PC-3 (cell line): ENCODE measurements at regions of chr18 and their contacts with region 1.

Region 1: DNA sequence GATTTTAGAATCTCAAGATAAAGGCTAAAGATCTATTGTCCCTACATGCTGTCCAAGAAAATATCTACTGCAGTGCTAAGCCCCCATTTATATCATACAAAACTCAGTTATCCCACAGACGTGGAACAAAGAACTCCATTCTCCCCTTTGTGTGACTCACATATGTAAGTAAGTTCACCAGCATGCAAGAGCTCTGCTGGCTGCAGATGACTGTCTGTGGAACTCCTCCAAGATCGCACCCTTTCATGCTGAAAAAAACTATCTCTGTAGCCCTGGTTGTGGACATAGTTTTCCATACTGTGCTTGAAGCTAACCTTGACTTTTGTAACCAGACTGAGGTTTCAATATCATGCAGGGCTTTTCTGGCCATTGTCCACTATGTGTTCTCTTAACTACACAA is 207.1 kb downstream of the ZNF521 start:
- DNase-seq: peak; percentile 17
- ATAC-seq: peak; percentile 67
- H3K4me3 ChIP-seq: no peak overlapping the region
- H3K27ac ChIP-seq: no peak overlapping the region
- H3K4me1 ChIP-seq: no peaks in the 10 kb centered on the region
- H3K27me3 ChIP-seq: peaks cover 46% of the 10 kb centered on the region
- CTCF ChIP-seq: no peak

Region 2: DNA sequence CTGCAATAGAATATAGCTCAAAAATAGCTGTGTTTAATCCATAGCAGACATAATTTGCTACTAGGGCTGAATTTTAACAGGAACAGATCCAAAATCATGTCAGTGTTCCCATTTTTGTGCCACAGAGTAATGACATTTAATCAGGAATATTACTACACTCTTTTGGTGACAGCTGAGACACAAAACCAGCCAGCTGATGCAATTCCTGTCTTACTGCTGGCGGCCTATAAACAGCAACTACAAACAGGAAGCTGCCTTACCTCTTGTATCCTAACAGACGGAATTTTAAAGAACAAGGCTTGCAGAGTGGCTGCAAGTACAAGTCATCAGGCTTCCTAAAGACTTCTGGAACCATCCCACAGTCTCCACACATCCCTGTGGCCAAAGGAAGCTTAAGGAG is 10.9 kb before region 1 on chr18:
- CTCF ChIA-PET with region 1: interaction called, 12 read pairs
- POLR2A ChIA-PET with region 1: no interaction called
- intact Hi-C with region 1: no loop called
- DNase-seq: no peak
- ATAC-seq: no peak
- H3K4me3 ChIP-seq: no peak overlapping the region
- H3K27ac ChIP-seq: no peak overlapping the region
- H3K4me1 ChIP-seq: no peaks in the 10 kb centered on the region
- H3K27me3 ChIP-seq: peaks cover 59% of the 10 kb centered on the region
- CTCF ChIP-seq: no peak

Region 3: GRCh38 chr18:25289001-25289631 is 144.3 kb after region 1 on chr18:
- CTCF ChIA-PET with region 1: interaction called, 15 read pairs
- POLR2A ChIA-PET with region 1: no interaction called
- intact Hi-C with region 1: no loop called
- DNase-seq: peak; percentile 84
- ATAC-seq: peak; percentile 88
- H3K4me3 ChIP-seq: peak overlapping the region; percentile 49
- H3K27ac ChIP-seq: peak overlapping the region; percentile 95
- H3K4me1 ChIP-seq: peaks cover 18% of the 10 kb centered on the region
- H3K27me3 ChIP-seq: no peaks in the 10 kb centered on the region
- CTCF ChIP-seq: no peak

Region 4: DNA sequence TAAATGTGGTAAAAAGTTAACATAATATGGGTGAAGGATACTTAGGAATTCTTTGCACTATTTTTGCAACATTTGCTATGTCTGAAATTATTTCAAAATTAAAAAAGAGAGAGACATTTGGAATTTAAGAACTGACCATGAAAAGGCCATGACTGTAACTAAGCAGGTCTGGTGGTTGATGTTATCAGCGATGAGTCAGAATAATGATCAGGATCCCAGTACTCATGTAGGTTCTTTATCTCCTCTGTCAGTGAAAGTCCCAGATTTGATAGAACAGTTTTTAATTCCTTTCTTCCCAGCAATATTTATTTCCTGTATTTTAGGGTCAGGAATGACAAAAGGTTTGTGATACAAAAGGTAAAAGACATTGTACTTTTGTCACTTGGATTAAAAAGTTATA is 449.5 kb after region 1 on chr18:
- CTCF ChIA-PET with region 1: no interaction called
- POLR2A ChIA-PET with region 1: no interaction called
- intact Hi-C with region 1: no loop called
- DNase-seq: peak; percentile 6
- ATAC-seq: no peak
- H3K4me3 ChIP-seq: no peak overlapping the region
- H3K27ac ChIP-seq: no peak overlapping the region
- H3K4me1 ChIP-seq: no peaks in the 10 kb centered on the region
- H3K27me3 ChIP-seq: peaks cover 11% of the 10 kb centered on the region; the same call in 1 of the 2 replicates
- CTCF ChIP-seq: no peak